PC-9 (cell line): ENCODE measurements at regions of chr22 and their contacts with region 1.

Region 1: GRCh38 chr22:18070556-18071306 is 7.1 kb upstream of the PEX26 start:
- DNase-seq: no peak
- H3K4me3 ChIP-seq: no peak overlapping the region
- H3K27ac ChIP-seq: no peak overlapping the region
- H3K4me1 ChIP-seq: no peaks in the 10 kb centered on the region
- H3K27me3 ChIP-seq: no peaks in the 10 kb centered on the region
- CTCF ChIP-seq: 0 out of 2 replicates have a peak, but pooled peaks have one; percentile 26

Region 2: DNA sequence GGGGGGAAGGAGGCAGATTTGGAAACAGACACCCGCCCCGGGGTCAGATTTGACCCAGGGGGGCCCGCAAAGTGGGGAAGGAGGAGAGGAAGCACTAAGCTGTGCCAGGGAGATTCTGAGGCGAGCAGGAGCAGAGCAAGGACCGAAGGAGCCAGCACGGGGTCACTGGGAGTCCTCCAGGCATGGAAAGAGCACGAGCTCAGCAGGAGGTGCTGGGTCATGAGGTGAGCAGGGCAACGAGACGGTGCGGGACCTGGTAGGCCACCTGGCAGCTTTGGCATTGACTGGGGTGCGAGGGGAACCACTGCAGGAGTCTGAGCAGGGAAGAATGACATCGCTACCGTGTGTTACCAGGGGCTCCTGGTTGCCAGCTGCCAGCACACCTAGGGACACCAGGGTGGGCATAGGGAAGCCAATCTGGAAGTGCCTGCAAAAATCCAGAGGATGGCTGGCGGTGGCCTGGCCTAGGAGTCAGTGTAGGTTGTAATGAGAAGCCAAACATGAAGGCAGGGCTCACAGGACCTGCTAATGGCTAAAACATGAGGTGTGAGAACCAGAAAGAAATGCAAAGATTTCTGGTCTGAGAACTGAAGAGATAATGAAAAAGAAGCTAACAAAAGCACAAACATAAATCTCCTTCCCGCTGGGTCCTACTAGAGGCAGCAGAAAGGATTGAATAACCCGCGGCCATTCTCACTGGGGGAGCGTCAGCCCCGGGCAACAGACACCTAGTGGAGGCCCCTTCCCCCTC is 109.9 kb before region 1 on chr22:
- CTCF ChIA-PET with region 1: no interaction called
- POLR2A ChIA-PET with region 1: interaction called, 27 read pairs
- intact Hi-C with region 1: no loop called
- DNase-seq: no peak
- H3K4me3 ChIP-seq: no peak overlapping the region
- H3K27ac ChIP-seq: no peak overlapping the region
- H3K4me1 ChIP-seq: no peaks in the 10 kb centered on the region
- H3K27me3 ChIP-seq: no peaks in the 10 kb centered on the region
- CTCF ChIP-seq: no peak

Region 3: GRCh38 chr22:18110194-18110953 is 39.6 kb after region 1 on chr22 and contains the start of gene TUBA8:
- CTCF ChIA-PET with region 1: no interaction called
- POLR2A ChIA-PET with region 1: no interaction called
- intact Hi-C with region 1: no loop called
- DNase-seq: peak in 1 of 2 experiments; percentile 10
- H3K4me3 ChIP-seq: peak within 1 kb of the TSS; percentile 8; the same call in 1 of the 2 replicates
- H3K27ac ChIP-seq: no peak within 1 kb of the TSS
- H3K4me1 ChIP-seq: no peaks in the 10 kb centered on the region
- H3K27me3 ChIP-seq: no peaks in the 10 kb centered on the region
- CTCF ChIP-seq: no peak
- total RNA-seq, gene TUBA8: 0.72 TPM in 1 of 2 replicates, not detected in the other

Region 4: GRCh38 chr22:18157714-18158028 is 86.9 kb after region 1 on chr22:
- CTCF ChIA-PET with region 1: no interaction called
- POLR2A ChIA-PET with region 1: no interaction called
- intact Hi-C with region 1: no loop called
- DNase-seq: no peak
- H3K4me3 ChIP-seq: no peak overlapping the region
- H3K27ac ChIP-seq: no peak overlapping the region
- H3K4me1 ChIP-seq: no peaks in the 10 kb centered on the region
- H3K27me3 ChIP-seq: no peaks in the 10 kb centered on the region
- CTCF ChIP-seq: no peak